H1 (cell line): ENCODE measurements at regions of chr16 and their contacts with region 1.

Region 1: GRCh38 chr16:46929378-46930332 is 43.8 kb downstream of the DNAJA2 start:
- DNase-seq: peak; percentile 53 to 94
- H3K4me3 ChIP-seq: no peak overlapping the region
- H3K27ac ChIP-seq: no peak overlapping the region
- H3K4me1 ChIP-seq: peaks cover 0 to 3% (median 0%) of the 10 kb centered on the region in 4 experiments; a peak in 1 of 7 replicates
- H3K27me3 ChIP-seq: no peaks in the 10 kb centered on the region
- CTCF ChIP-seq: peak; percentile 79 to 98 (median 92)
- EP300 ChIP-seq: no peak
- POLR2A ChIP-seq: no peak
- RAD21 ChIP-seq: peak; percentile 61 to 69

Region 2: GRCh38 chr16:46883690-46884512 is 45.8 kb before region 1 on chr16 and contains the start of gene GPT2:
- CTCF ChIA-PET with region 1: interaction called, 3 read pairs
- POLR2A ChIA-PET with region 1: interaction called, 198 read pairs
- DNase-seq: peak; percentile 88 to 97
- H3K4me3 ChIP-seq: peak within 1 kb of the TSS; percentile 85 to 95 (median 86)
- H3K27ac ChIP-seq: peak within 1 kb of the TSS; percentile 79
- H3K4me1 ChIP-seq: peaks cover 8 to 31% (median 18%) of the 10 kb centered on the region in 4 experiments
- H3K27me3 ChIP-seq: no peaks in the 10 kb centered on the region
- CTCF ChIP-seq: no peak
- EP300 ChIP-seq: no peak
- POLR2A ChIP-seq: peak; percentile 52 to 89
- RAD21 ChIP-seq: no peak
- total RNA-seq, gene GPT2: 86.3 and 94.1 TPM in 2 replicates

Region 3: GRCh38 chr16:46908540-46909372 is 20.9 kb before region 1 on chr16:
- CTCF ChIA-PET with region 1: interaction called, 13 read pairs
- POLR2A ChIA-PET with region 1: interaction called, 321 read pairs
- DNase-seq: peak; percentile 27 to 81
- H3K4me3 ChIP-seq: no peak overlapping the region
- H3K27ac ChIP-seq: no peak overlapping the region; the same call in 1 of the 2 replicates
- H3K4me1 ChIP-seq: no peaks in the 10 kb centered on the region
- H3K27me3 ChIP-seq: no peaks in the 10 kb centered on the region
- CTCF ChIP-seq: peak; percentile 26 to 82 (median 66)
- EP300 ChIP-seq: no peak
- POLR2A ChIP-seq: no peak
- RAD21 ChIP-seq: peak; percentile 60 to 75

Region 4: GRCh38 chr16:46918861-46919792 is 10.5 kb before region 1 on chr16:
- CTCF ChIA-PET with region 1: interaction called, 34 read pairs
- POLR2A ChIA-PET with region 1: interaction called, 321 read pairs
- DNase-seq: no peak
- H3K4me3 ChIP-seq: no peak overlapping the region
- H3K27ac ChIP-seq: no peak overlapping the region
- H3K4me1 ChIP-seq: no peaks in the 10 kb centered on the region
- H3K27me3 ChIP-seq: no peaks in the 10 kb centered on the region
- CTCF ChIP-seq: no peak
- EP300 ChIP-seq: no peak
- POLR2A ChIP-seq: no peak
- RAD21 ChIP-seq: no peak

Region 5: GRCh38 chr16:46980926-46981325 is 51.3 kb after region 1 on chr16:
- CTCF ChIA-PET with region 1: no interaction called
- POLR2A ChIA-PET with region 1: no interaction called
- DNase-seq: no peak
- H3K4me3 ChIP-seq: no peak overlapping the region
- H3K27ac ChIP-seq: no peak overlapping the region
- H3K4me1 ChIP-seq: peaks cover 0 to 4% (median 1%) of the 10 kb centered on the region in 4 experiments; a peak in 2 of 7 replicates
- H3K27me3 ChIP-seq: no peaks in the 10 kb centered on the region
- CTCF ChIP-seq: no peak
- EP300 ChIP-seq: no peak
- POLR2A ChIP-seq: no peak
- RAD21 ChIP-seq: no peak